Activated CD4-positive, alpha-beta memory T cell treated with anti-CD3 and anti-CD28 coated beads for 36 hours (primary cell): ENCODE measurements at regions of chr3 and their contacts with region 1.

Region 1: GRCh38 chr3:186413615-186414415 is 51.8 kb upstream of the DGKG start:
- DNase-seq: peak; percentile 61
- H3K4me3 Mint-ChIP-seq: peak overlapping the region; percentile 55
- H3K27ac Mint-ChIP-seq: no peak overlapping the region
- H3K4me1 Mint-ChIP-seq: peaks cover 45% of the 10 kb centered on the region
- H3K27me3 Mint-ChIP-seq: no peaks in the 10 kb centered on the region

Region 2: DNA sequence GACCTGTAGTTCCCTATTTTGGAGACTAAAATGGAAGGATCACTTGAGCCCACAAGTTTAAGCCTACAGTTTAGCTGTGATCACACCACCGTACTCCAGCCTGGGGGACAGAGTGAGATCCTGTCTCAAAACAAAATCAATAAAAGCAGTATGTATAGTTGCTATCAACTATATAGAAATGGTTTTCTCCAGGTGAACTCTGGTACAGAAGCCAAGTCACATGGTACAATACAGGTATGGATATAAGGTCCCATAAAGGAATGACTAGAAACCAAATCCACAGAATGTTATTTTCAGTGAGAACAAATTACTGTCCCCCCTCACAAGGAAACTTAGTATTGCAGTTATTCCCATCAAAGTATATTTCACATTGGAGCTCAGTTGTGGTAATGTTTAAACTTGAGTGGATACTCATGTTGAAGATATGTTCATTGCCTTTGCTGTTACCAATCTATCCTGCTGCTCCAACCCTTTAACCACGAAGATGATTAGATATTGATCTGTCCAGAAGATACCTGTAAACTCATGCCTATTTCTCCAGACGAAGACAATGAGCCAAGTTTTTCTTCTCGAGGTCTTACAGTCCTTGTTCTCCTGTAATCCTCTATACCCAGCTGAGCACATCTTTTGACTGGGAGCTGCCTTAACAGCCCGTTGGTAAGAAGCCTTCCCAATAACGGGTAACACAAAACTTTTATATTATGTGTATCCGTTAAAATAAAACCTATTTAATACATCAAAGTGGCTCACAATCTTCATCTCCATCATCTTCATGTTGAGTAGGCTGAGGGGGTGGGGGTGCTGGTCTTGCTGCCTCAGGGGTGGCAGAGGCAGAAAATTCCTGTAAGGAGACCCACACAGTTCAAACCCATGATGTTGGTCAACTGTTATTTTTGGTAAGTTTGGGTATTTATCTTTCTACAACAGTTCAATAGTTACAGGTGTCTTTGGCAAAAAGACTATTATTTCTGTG is 500.6 kb before region 1 on chr3:
- CTCF ChIA-PET with region 1: no interaction called
- POLR2A ChIA-PET with region 1: no interaction called
- intact Hi-C with region 1: no loop called
- DNase-seq: no peak
- H3K4me3 Mint-ChIP-seq: no peak overlapping the region
- H3K27ac Mint-ChIP-seq: peak overlapping the region; percentile 36
- H3K4me1 Mint-ChIP-seq: no peaks in the 10 kb centered on the region
- H3K27me3 Mint-ChIP-seq: no peaks in the 10 kb centered on the region

Region 3: DNA sequence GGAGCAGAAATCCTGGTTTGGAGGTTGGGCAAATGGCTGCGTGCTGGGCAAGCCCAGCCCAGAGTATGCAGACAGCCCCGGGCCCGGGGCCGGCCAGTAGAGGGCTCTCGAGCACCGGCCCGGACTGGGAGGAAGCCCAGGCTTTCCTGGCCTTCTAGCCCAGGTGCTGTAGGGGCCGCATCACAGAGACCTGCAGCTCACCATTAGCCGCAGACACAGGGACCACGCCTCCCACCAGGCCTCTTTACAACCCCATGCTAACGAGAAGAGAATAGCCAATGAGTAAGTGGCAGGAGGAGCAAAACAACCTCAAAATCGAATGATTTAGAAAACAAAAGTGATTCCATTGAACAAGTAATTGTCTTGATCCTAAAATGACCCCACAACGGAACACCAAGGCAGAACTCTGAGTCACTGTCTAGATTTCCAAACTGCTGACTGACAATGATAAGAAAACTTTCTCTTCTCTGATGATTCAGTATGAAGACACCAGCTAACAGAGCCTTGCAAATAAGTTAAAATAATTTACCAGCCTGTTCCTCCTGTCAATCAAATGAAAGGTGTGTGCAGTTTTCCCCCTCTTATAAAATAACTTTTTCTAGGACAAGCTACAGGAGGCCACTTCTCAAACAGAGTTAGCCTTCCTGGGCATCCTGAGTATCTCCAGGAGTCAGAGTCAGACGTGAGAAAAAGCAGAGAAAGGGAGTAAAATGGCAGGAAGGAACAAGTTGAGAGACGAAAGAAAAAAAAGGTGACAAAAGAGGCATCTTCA is 154.0 kb before region 1 on chr3:
- CTCF ChIA-PET with region 1: interaction called, 3 read pairs
- POLR2A ChIA-PET with region 1: no interaction called
- intact Hi-C with region 1: loop called (anchors 10 kb)
- DNase-seq: peak; percentile 85
- H3K4me3 Mint-ChIP-seq: peak overlapping the region; percentile 24
- H3K27ac Mint-ChIP-seq: peak overlapping the region; percentile 65
- H3K4me1 Mint-ChIP-seq: peaks cover 27% of the 10 kb centered on the region
- H3K27me3 Mint-ChIP-seq: peaks cover 6% of the 10 kb centered on the region

Region 4: GRCh38 chr3:186354100-186354499 is 59.7 kb before region 1 on chr3:
- CTCF ChIA-PET with region 1: no interaction called
- POLR2A ChIA-PET with region 1: no interaction called
- intact Hi-C with region 1: no loop called
- DNase-seq: no peak
- H3K4me3 Mint-ChIP-seq: no peak overlapping the region
- H3K27ac Mint-ChIP-seq: no peak overlapping the region
- H3K4me1 Mint-ChIP-seq: no peaks in the 10 kb centered on the region
- H3K27me3 Mint-ChIP-seq: peaks cover 10% of the 10 kb centered on the region

Region 5: DNA sequence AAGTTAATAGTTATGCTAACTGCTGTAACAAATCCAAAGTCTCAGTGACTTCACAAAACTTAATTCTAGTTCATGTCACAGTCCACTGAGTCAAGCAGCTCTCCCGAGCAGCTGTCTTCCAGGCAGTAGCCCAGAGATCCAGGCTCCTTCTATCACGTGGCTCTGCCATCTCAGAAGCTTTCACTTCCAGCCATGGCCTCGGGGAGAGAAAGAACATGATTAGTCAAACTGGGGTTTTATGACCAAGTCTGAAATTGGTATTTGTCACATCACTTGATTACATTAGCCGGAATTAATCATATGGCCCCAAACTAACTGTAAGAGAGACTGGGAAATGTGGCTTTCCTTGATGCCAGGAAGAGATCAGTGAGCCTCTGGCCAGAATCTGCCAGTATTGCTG is 18.4 kb after region 1 on chr3:
- CTCF ChIA-PET with region 1: interaction called, 3 read pairs
- POLR2A ChIA-PET with region 1: no interaction called
- intact Hi-C with region 1: loop called (anchors 1 kb)
- DNase-seq: peak; percentile 66
- H3K4me3 Mint-ChIP-seq: no peak overlapping the region
- H3K27ac Mint-ChIP-seq: no peak overlapping the region
- H3K4me1 Mint-ChIP-seq: peaks cover 15% of the 10 kb centered on the region
- H3K27me3 Mint-ChIP-seq: peaks cover 1% of the 10 kb centered on the region

Region 6: GRCh38 chr3:186514296-186515002 is 100.6 kb after region 1 on chr3:
- CTCF ChIA-PET with region 1: no interaction called
- POLR2A ChIA-PET with region 1: no interaction called
- intact Hi-C with region 1: loop called (anchors 5 kb)
- DNase-seq: peak; percentile 72
- H3K4me3 Mint-ChIP-seq: no peak overlapping the region
- H3K27ac Mint-ChIP-seq: peak overlapping the region; percentile 81
- H3K4me1 Mint-ChIP-seq: peaks cover 96% of the 10 kb centered on the region
- H3K27me3 Mint-ChIP-seq: no peaks in the 10 kb centered on the region

Region 7: DNA sequence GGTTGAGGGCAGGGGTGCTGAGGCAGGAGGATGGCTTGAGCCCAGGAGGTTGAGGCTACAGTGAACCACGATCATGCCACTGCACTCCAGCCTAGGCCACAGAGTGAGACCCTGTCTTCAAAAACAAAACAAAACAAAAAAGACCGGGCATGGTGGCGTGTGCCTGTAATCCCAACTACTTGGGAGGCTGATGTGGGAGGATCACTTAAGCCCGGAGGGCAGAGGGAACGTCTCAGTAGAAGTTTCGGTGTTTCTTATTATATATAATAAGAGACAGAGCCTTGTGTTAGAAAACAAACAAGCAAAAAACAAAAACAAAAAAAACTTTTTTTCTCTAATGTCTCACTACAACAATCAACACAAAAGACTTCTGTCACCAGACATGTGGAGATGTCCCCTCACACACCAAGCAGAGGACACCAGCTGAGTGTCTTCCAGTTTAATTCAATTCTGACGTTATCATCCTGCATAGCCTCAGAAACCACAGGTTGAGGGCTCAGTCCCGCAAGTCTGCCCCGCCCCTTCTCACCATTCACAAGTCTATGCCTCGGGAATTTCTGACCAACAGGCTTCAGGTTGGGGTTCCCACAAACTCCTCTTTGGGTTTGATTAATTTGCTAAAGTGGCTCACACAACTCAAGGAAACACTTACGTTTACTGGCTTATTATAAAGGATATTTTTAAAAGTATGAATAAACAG is 345.6 kb after region 1 on chr3:
- CTCF ChIA-PET with region 1: no interaction called
- POLR2A ChIA-PET with region 1: no interaction called
- intact Hi-C with region 1: loop called (anchors 10 kb)
- DNase-seq: no peak
- H3K4me3 Mint-ChIP-seq: no peak overlapping the region
- H3K27ac Mint-ChIP-seq: no peak overlapping the region
- H3K4me1 Mint-ChIP-seq: peaks cover 4% of the 10 kb centered on the region
- H3K27me3 Mint-ChIP-seq: peaks cover 4% of the 10 kb centered on the region